ENCODE measurements at regions of chr11 and their contacts with region 1.

Region 1: DNA sequence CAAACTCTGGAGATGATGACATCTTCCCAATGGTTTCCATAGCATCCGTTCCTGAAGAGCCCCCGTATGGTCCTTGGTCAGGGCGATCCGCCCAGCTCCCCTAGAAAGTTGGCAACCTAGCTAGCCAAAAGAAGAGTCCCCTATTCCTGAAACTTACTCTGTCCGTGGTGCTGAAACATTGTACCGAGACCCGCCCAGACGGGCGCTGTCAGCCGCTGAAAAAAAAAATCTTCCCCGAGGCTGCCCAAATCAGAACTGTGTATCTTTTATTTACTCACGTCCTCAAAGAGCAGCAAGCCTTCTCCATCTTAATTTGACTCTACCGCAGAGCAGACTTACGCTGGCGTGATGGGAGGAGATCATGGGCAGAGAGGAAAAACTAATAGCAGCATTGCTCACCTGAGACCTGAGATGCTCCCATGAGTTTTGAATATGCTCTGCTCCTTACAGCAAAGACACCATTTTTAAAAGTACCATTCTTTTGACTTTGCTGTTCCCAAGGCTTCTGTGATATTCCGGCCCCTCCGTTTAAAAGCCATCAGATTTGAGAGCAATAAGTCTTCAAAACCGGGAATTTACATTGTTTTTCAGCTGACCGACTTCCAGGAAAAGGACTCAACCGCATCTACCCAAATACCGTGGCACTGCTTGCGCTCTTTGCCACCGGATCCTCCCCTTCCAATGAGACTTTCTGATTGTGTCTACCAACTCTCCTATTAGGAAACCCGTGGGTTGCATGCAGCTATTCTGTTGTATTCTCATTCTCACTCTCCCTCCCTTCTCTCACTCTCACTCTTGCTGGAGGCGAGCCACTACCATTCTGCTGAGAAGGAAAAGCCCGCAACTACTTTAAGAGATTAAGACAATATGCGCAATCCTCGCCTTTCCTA is at the start of gene SLC17A6:
- DNase-seq: no peak
- ATAC-seq: no peak
- total RNA-seq, gene SLC17A6: not detected

Region 2: DNA sequence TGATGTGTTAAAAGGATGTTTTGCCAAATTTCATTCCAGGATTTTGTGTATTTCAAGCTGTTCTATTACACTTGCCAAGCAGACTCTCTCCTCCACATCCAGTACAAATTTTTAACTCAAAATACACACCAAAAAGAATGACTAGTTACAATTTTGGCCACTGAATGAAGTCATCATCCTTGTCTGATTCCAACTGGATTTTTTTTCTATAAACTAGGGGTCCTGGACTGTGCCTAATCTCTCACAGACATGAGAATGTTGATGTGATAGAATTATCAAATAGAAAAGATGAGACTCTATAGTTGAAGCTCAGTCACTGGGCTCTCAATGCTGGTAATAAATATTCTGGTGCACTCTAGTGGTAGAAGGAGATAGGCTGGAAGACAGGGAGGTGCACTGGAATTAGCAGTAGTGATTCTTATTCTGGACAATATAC is 202.0 kb after region 1 on chr11:
- intact Hi-C with region 1: loop called (anchors 10 kb)
- DNase-seq: no peak
- ATAC-seq: no peak

Region 3: DNA sequence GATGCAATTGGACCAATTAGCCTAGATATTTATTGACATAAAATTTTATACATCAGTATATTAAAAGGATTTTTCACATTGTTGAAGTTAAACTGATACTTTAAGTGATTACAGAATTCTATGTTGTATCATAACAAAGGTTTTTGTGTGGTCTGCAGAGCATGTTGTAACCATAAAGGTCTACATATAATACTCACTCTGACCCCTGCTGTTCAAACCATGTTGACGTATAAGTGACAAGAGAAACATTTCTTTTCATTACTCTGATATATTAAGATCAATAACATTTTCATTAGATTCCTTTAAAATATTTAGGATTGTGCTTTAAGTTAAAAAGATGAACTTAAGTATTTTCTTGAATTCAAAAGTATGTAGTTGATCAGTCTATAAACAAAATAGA is 392.5 kb after region 1 on chr11:
- intact Hi-C with region 1: loop called (anchors 10 kb)
- DNase-seq: no peak
- ATAC-seq: no peak

Region 4: GRCh38 chr11:22787551-22788162 is 449.8 kb after region 1 on chr11:
- intact Hi-C with region 1: loop called (anchors 2 kb)
- DNase-seq: no peak
- ATAC-seq: no peak